Mammary epithelial cell (primary cell): ENCODE measurements at regions of chr3 and their contacts with region 1.

Region 1: DNA sequence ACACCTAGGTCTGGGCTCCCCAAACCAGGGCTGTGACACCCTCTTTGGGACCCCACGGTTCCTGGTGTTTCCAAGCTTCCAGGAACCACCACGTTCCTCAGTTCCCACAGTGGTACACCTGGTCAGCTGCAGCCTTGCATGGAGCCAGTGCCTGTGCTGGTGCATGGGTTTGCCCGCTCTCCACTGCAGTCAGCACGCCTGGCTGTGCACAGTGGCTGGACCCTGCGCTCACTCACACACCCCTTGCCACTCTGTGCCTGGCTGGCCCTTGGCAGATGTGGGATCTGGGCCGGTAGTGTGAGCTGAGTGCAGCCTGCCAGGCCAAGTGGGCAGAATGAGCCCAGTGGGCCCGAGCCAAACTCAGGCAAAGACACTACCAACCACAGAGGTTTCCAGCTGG is 48.8 kb downstream of the TCAIM start:
- DNase-seq: no peak
- H3K4me3 ChIP-seq: no peak overlapping the region
- H3K27ac ChIP-seq: no peak overlapping the region
- H3K4me1 ChIP-seq: no peaks in the 10 kb centered on the region
- H3K27me3 ChIP-seq: no peaks in the 10 kb centered on the region
- CTCF ChIP-seq: no peak

Region 2: GRCh38 chr3:44318891-44319311 is 68.5 kb before region 1 on chr3:
- CTCF ChIA-PET with region 1: no interaction called
- dilution Hi-C with region 1: no loop called
- in situ Hi-C with region 1: no loop called
- intact Hi-C with region 1: no loop called
- DNase-seq: no peak
- H3K4me3 ChIP-seq: no peak overlapping the region
- H3K27ac ChIP-seq: no peak overlapping the region
- H3K4me1 ChIP-seq: no peaks in the 10 kb centered on the region
- H3K27me3 ChIP-seq: no peaks in the 10 kb centered on the region
- CTCF ChIP-seq: no peak

Region 3: GRCh38 chr3:44365952-44366351 is 21.5 kb before region 1 on chr3:
- CTCF ChIA-PET with region 1: no interaction called
- dilution Hi-C with region 1: no loop called
- in situ Hi-C with region 1: no loop called
- intact Hi-C with region 1: loop called (anchors 2 kb)
- DNase-seq: no peak
- H3K4me3 ChIP-seq: no peak overlapping the region
- H3K27ac ChIP-seq: no peak overlapping the region
- H3K4me1 ChIP-seq: no peaks in the 10 kb centered on the region
- H3K27me3 ChIP-seq: no peaks in the 10 kb centered on the region
- CTCF ChIP-seq: no peak

Region 4: GRCh38 chr3:44418549-44418948 is 31.1 kb after region 1 on chr3:
- CTCF ChIA-PET with region 1: no interaction called
- dilution Hi-C with region 1: no loop called
- in situ Hi-C with region 1: no loop called
- intact Hi-C with region 1: no loop called
- DNase-seq: no peak
- H3K4me3 ChIP-seq: no peak overlapping the region
- H3K27ac ChIP-seq: no peak overlapping the region
- H3K4me1 ChIP-seq: no peaks in the 10 kb centered on the region
- H3K27me3 ChIP-seq: no peaks in the 10 kb centered on the region
- CTCF ChIP-seq: peak; percentile 29 to 32

Region 5: GRCh38 chr3:44966750-44967278 is 579.4 kb after region 1 on chr3:
- CTCF ChIA-PET with region 1: interaction called, 10 read pairs
- dilution Hi-C with region 1: no loop called
- in situ Hi-C with region 1: no loop called
- intact Hi-C with region 1: no loop called
- DNase-seq: peak; percentile 99
- H3K4me3 ChIP-seq: peak overlapping the region in 1 of 3 experiments; percentile 14
- H3K27ac ChIP-seq: peak overlapping the region; percentile 93
- H3K4me1 ChIP-seq: peaks cover 85% of the 10 kb centered on the region
- H3K27me3 ChIP-seq: no peaks in the 10 kb centered on the region
- CTCF ChIP-seq: no peak